Activated B cell treated with CpG ODN at 0.5 μM for 24 hours (primary cell): ENCODE measurements at regions of chr7 and their contacts with region 1.

Region 1: DNA sequence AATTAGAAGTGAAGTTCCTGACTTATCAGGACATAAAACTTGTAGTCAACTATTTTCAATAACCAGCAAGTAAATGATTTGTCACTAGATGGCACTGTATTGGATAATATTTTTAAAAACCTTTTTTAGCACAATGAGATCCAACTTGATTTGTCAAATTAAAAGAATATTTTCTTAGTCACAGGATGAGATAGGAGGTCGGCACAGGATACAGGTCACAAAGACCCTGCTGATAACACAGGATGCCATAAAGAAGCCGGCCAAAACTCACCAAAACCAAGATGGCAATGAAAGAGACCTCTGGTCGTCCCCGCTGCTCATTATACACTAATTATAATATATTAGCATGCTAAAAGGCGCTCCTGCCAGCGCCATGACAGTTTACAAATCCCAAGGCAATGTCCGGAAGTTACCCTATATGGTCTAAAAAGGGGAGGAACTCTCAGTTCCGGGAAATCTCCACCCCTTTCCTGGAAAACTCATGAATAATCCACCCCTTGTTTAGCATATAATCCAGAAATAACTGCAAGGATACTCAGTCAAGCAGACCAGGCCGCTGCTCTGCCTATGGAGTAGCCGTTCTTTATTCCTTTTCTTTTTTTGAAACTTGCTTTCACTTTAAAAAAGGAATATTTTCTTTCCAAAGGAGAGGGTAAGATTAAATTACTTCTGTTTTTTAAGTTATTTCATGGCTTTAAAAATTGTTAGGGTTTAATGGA is 255.7 kb upstream of the MKLN1 start:
- DNase-seq: no peak
- ATAC-seq: no peak
- H3K4me3 Mint-ChIP-seq: no peak overlapping the region
- H3K27ac Mint-ChIP-seq: peak overlapping the region; percentile 73
- H3K4me1 Mint-ChIP-seq: peaks cover 82% of the 10 kb centered on the region
- H3K27me3 Mint-ChIP-seq: no peaks in the 10 kb centered on the region
- CTCF ChIP-seq: no peak

Region 2: DNA sequence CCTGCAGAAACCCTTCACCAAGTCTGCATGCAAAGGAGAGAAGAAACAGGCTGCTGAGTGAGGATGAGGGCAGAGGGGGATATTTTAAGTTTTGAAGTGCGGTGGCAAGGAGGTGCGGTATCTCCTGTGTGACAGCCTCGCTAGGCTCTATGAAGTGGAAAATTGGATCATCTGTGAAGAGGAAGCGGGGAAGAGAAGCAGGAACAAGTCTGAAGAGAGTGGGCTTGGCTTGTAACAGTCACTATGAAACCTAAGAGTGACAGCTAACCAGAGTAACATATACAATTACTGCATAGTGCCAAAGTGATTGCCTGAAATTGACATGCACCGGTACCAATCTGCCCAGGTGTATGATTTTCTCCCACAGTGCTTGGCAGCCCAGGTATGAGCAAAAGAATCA is 50.5 kb before region 1 on chr7:
- CTCF ChIA-PET with region 1: no interaction called
- POLR2A ChIA-PET with region 1: no interaction called
- intact Hi-C with region 1: no loop called
- DNase-seq: no peak
- ATAC-seq: peak; percentile 43
- H3K4me3 Mint-ChIP-seq: peak overlapping the region; percentile 57
- H3K27ac Mint-ChIP-seq: peak overlapping the region; percentile 83
- H3K4me1 Mint-ChIP-seq: peaks cover 77% of the 10 kb centered on the region
- H3K27me3 Mint-ChIP-seq: no peaks in the 10 kb centered on the region
- CTCF ChIP-seq: no peak

Region 3: DNA sequence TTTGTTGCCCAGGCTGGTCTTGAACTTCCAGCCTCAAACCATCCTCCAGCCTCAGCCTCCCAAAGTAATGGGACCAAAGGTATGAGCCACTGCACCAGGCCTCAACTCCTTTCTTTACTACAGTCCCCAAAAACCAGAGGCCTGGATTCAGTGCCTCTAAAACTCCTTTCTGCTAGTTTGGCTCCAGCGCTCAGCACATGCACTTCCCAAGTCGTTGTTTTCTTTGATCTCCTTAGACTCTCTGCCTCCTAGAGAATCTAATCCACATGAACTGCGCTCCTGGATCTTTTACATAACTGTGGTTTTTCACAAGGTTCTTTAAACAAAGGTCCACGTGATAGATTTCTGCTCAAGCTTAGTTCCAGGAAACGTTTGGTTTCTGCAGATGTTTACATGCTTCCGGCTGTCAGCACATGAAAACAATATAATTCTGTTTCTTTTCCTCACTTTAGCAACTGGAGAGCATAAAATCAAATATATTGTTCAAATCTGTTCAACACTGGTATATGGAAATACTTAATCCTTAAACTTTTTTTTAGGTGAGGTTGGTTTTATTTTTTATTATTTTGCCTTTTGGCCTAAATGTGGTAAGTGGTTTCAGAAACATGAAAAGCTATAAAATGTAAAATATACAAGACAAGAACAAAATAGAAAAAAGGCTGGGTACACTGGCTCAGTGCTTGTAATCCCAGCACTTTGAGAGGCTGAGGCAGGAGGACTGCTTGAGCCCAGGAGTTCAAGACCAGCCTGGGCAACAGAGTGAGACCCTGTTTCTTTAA is 14.7 kb before region 1 on chr7:
- CTCF ChIA-PET with region 1: interaction called, 9 read pairs
- POLR2A ChIA-PET with region 1: interaction called, 11 read pairs
- intact Hi-C with region 1: loop called (anchors 1 kb)
- DNase-seq: no peak
- ATAC-seq: peak; percentile 59
- H3K4me3 Mint-ChIP-seq: peak overlapping the region; percentile 76
- H3K27ac Mint-ChIP-seq: peak overlapping the region; percentile 97
- H3K4me1 Mint-ChIP-seq: peaks cover 79% of the 10 kb centered on the region
- H3K27me3 Mint-ChIP-seq: no peaks in the 10 kb centered on the region
- CTCF ChIP-seq: no peak

Region 4: DNA sequence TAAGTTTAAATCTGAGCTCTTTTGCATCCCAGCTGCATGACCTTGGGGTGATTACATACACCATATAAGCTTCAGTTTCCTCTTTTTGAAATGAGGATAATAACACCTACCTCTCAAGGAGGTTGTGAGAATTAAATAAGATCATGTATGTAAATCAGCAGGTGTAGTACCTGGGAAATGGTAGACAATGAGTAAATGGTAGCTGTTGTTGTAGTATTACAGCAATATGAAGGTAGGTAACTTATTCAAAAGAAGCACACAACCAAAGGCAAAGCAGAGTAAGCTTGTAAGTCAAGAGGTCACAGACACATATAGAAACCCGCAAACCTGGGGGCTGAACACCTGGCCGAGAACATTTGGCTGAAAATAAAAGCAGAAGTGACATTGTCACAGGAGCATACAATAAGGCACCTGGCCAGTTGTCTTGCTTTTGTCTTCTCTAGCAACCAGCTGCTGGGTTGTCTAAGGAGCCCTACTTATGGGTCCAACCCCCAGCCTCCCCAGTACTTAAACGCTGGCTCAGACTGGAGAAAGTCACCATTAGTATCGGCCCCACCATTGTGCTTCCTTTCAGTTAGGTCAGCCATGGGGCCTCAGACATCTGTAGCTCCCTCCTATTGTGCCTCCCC is 52.2 kb after region 1 on chr7:
- CTCF ChIA-PET with region 1: no interaction called
- POLR2A ChIA-PET with region 1: no interaction called
- intact Hi-C with region 1: no loop called
- DNase-seq: no peak
- ATAC-seq: peak; percentile 86
- H3K4me3 Mint-ChIP-seq: peak overlapping the region; percentile 52
- H3K27ac Mint-ChIP-seq: peak overlapping the region; percentile 85
- H3K4me1 Mint-ChIP-seq: peaks cover 40% of the 10 kb centered on the region
- H3K27me3 Mint-ChIP-seq: no peaks in the 10 kb centered on the region
- CTCF ChIP-seq: no peak

Region 5: GRCh38 chr7:131302876-131303707 is 231.1 kb after region 1 on chr7:
- CTCF ChIA-PET with region 1: interaction called, 14 read pairs
- POLR2A ChIA-PET with region 1: no interaction called
- intact Hi-C with region 1: loop called (anchors 1 kb)
- DNase-seq: no peak
- ATAC-seq: no peak
- H3K4me3 Mint-ChIP-seq: no peak overlapping the region
- H3K27ac Mint-ChIP-seq: no peak overlapping the region
- H3K4me1 Mint-ChIP-seq: no peaks in the 10 kb centered on the region
- H3K27me3 Mint-ChIP-seq: no peaks in the 10 kb centered on the region
- CTCF ChIP-seq: no peak

Region 6: DNA sequence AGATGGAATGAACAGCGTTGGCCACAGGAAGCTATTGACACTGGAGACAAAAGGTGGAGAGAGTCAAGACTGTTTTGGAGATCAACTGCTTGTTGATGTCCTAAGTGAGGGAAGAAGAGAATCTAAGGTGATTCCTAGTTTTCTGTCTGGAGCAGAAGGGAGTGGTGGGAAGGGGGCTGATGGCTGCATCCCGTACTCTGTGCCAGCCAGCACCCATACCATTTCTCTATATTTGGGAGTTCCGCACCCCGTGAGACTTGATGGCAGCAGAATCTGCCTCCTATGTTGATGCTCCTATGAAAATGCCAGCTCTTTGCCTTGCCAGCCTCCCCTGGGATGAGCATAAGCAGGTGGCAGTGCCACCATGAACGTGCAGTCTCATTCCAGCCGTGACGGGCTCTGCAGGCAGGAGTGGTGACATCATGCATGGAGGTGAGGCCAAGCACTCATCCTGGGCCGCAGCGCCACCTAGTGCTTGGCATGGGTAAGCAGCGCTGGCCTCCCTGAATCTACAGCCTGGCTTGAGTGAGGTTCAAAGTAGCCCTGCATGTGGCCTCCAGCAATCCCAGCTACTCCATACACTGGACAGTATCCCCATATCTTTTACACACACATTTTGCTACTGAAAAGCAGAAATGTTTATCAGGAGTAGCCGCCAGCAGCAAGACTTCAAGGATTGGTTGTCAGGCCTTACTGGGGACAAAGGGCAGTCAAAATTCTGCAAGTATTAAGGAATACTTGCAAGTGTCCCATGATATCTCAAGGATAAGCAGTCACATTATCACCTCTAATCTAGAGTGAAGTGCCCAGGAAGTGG is 441.5 kb after region 1 on chr7:
- CTCF ChIA-PET with region 1: no interaction called
- POLR2A ChIA-PET with region 1: no interaction called
- intact Hi-C with region 1: loop called (anchors 5 kb)
- DNase-seq: peak; percentile 60
- ATAC-seq: peak; percentile 97
- H3K4me3 Mint-ChIP-seq: no peak overlapping the region
- H3K27ac Mint-ChIP-seq: no peak overlapping the region
- H3K4me1 Mint-ChIP-seq: peaks cover 16% of the 10 kb centered on the region
- H3K27me3 Mint-ChIP-seq: peaks cover 3% of the 10 kb centered on the region
- CTCF ChIP-seq: peak; percentile 53